ENCODE measurements at regions of chr11 and their contacts with region 1.

Region 1: DNA sequence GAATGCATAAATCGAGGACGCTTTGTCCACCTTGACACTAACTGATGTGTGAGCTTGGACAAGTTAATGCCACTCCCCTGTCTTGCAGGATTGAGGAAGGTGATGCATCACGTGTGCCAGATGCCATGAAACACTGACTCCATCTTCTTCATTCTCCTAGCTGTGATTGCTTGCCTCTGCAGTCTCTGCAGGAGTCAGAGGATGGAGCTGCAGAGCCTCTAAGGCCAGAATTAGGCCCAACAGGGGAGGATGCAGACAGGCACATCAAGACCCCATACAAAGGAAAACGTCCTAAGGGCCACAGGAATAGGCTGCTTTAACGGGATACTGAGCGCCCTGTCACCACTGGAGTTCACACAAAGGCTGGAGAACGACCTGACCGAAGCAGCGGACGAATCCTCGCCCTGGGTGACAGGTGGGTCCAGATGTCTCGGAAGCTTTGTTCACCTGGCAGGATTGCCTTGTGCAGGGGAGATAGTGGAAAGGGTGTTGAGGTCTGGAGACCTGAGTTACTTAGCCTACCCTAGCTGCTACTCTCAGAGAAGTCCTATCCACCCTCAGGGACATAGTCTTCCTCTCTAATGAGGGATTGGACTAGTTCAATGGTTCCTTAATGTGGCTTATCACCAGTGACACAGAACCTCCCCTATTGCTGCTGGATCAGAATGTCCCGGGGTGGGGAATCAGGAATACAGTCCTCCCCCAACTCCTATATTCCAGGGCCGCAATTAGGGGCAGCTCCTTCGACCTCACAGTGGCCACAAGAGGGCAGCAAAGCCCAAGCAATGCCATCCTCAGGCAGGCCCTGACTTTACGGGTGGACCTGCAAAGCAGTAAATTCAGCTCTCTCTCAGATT is 32.4 kb downstream of the DBX1 start:
- DNase-seq: peak; percentile 84
- H3K4me3 ChIP-seq: no peak overlapping the region; a peak in 1 of 4 replicates
- H3K27ac ChIP-seq: peak overlapping the region in 1 of 2 experiments; percentile 54; a peak in 1 of 4 replicates
- H3K4me1 ChIP-seq: no peaks in the 10 kb centered on the region
- H3K27me3 ChIP-seq: no peaks in the 10 kb centered on the region
- CTCF ChIP-seq: peak; percentile 89
- EP300 ChIP-seq: no peak
- RAD21 ChIP-seq: peak; percentile 97

Region 2: GRCh38 chr11:19951558-19952115 is 176.3 kb before region 1 on chr11:
- CTCF ChIA-PET with region 1: interaction called, 26 read pairs
- POLR2A ChIA-PET with region 1: no interaction called
- DNase-seq: peak; percentile 42
- H3K4me3 ChIP-seq: no peak overlapping the region; a peak in 1 of 4 replicates
- H3K27ac ChIP-seq: peak overlapping the region; percentile 83 to 91
- H3K4me1 ChIP-seq: peaks cover 45 to 49% of the 10 kb centered on the region in 2 experiments
- H3K27me3 ChIP-seq: no peaks in the 10 kb centered on the region
- CTCF ChIP-seq: peak; percentile 72
- EP300 ChIP-seq: no peak
- RAD21 ChIP-seq: peak; percentile 77

Region 3: DNA sequence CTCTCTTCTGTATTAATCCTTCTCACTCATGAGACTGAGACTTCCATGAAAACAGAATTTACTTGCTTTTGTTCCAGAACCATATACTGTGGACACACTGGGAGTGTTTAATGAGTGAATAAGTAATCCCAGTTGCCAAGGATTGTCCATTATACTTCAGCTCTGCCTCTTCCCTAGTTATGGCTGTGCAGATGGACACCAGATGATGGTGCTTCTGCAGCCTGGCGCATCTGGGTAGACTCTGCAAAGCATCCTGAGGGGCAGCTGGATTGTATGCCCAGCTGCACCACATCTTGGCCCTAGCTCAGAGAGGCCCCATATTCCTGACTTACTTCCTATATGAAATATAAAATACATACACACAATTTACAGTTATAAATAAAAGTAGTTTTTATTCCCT is 11.1 kb before region 1 on chr11:
- CTCF ChIA-PET with region 1: interaction called, 42 read pairs
- POLR2A ChIA-PET with region 1: no interaction called
- DNase-seq: peak; percentile 44
- H3K4me3 ChIP-seq: no peak overlapping the region
- H3K27ac ChIP-seq: peak overlapping the region; percentile 39 to 97; a peak in 3 of 4 replicates
- H3K4me1 ChIP-seq: peaks cover 12 to 16% of the 10 kb centered on the region in 2 experiments
- H3K27me3 ChIP-seq: no peaks in the 10 kb centered on the region
- CTCF ChIP-seq: no peak
- EP300 ChIP-seq: no peak
- RAD21 ChIP-seq: no peak

Region 4: DNA sequence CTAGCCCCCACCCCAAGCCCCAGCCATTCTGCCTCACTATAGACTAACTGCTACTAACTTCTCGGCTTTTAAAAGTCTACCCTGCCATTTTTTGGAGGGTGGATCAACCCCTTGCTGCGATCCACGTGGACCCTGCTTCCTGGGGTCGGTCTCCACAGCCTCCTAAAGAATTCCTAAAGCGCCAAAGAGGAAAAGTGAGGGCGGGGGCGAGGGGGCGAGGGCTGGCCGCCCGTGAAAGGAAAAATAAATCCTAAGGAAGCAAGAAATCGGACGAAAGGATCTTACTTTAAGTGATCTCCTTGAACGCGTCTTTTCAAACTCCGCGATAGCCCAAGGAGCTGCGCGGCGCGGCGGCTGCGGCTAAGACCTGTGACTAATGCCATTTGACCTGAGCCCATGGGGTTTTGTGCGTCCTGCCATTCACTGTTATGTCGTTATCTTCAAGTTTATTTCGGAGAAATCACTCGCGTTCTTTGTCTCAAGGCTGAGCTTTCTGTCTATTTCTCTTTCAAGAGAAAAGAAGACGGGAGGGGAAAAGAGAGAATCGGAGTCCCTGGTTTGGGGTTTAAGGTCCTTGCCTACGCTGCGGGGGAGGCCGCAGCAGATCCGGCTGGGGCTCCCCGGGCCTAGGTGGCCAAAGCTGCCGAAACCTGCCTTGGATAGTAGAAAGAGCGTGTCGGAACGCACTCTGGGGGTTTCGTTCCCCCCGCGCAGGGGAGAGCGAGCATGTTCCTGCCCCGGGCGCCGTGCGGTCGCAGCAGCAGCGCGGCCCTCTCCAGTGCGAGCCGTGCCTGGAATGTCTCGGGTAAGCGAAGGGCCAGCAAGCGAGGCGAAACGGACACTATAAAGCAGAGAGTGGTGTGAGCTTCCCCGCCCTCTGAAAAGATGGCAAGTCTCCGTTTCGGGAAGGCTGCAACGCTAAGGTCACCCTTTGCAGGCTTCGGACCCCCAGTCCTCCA is 35.2 kb after region 1 on chr11:
- CTCF ChIA-PET with region 1: interaction called, 22 read pairs
- POLR2A ChIA-PET with region 1: no interaction called
- DNase-seq: peak; percentile 64
- H3K4me3 ChIP-seq: peak overlapping the region; percentile 26 to 28; a peak in 3 of 4 replicates
- H3K27ac ChIP-seq: no peak overlapping the region
- H3K4me1 ChIP-seq: peaks cover 0 to 16% of the 10 kb centered on the region in 2 experiments; a peak in 2 of 4 replicates
- H3K27me3 ChIP-seq: peaks cover 61% of the 10 kb centered on the region
- CTCF ChIP-seq: no peak
- EP300 ChIP-seq: no peak
- RAD21 ChIP-seq: no peak

Region 5: GRCh38 chr11:20327377-20327935 is 199.6 kb after region 1 on chr11:
- CTCF ChIA-PET with region 1: interaction called, 208 read pairs
- POLR2A ChIA-PET with region 1: no interaction called
- DNase-seq: peak; percentile 60
- H3K4me3 ChIP-seq: no peak overlapping the region
- H3K27ac ChIP-seq: peak overlapping the region in 1 of 2 experiments; percentile 28; a peak in 2 of 4 replicates
- H3K4me1 ChIP-seq: peaks cover 0 to 8% of the 10 kb centered on the region in 2 experiments; a peak in 2 of 4 replicates
- H3K27me3 ChIP-seq: no peaks in the 10 kb centered on the region
- CTCF ChIP-seq: no peak
- EP300 ChIP-seq: peak in 1 of 2 experiments; percentile 89; a peak in 2 of 4 replicates
- RAD21 ChIP-seq: no peak

Region 6: GRCh38 chr11:20355221-20356219 is 227.6 kb after region 1 on chr11:
- CTCF ChIA-PET with region 1: interaction called, 302 read pairs
- POLR2A ChIA-PET with region 1: interaction called, 7 read pairs
- DNase-seq: peak; percentile 56
- H3K4me3 ChIP-seq: no peak overlapping the region; a peak in 1 of 4 replicates
- H3K27ac ChIP-seq: no peak overlapping the region
- H3K4me1 ChIP-seq: no peaks in the 10 kb centered on the region; a peak in 1 of 4 replicates
- H3K27me3 ChIP-seq: no peaks in the 10 kb centered on the region
- CTCF ChIP-seq: peak; percentile 72
- EP300 ChIP-seq: no peak
- RAD21 ChIP-seq: peak; percentile 60

Region 7: GRCh38 chr11:20909995-20910726 is 782.3 kb after region 1 on chr11:
- CTCF ChIA-PET with region 1: no interaction called
- POLR2A ChIA-PET with region 1: no interaction called
- DNase-seq: no peak
- H3K4me3 ChIP-seq: no peak overlapping the region
- H3K27ac ChIP-seq: no peak overlapping the region; a peak in 1 of 4 replicates
- H3K4me1 ChIP-seq: peaks cover 0 to 8% of the 10 kb centered on the region in 2 experiments; a peak in 2 of 4 replicates
- H3K27me3 ChIP-seq: no peaks in the 10 kb centered on the region
- CTCF ChIP-seq: no peak
- EP300 ChIP-seq: no peak
- RAD21 ChIP-seq: no peak

Measured in SK-N-SH (cell line).